ENCODE measurements at regions of chr10 and their contacts with region 1.

Region 1: GRCh38 chr10:43340619-43341018 is 30.8 kb upstream of the FXYD4 start:
- DNase-seq: peak; percentile 56
- H3K4me3 ChIP-seq: no peak overlapping the region
- H3K27ac ChIP-seq: no peak overlapping the region
- H3K4me1 ChIP-seq: no peaks in the 10 kb centered on the region
- H3K27me3 ChIP-seq: no peaks in the 10 kb centered on the region
- CTCF ChIP-seq: no peak
- POLR2A ChIP-seq: no peak

Region 2: GRCh38 chr10:43299579-43299978 is 41.0 kb before region 1 on chr10:
- intact Hi-C with region 1: loop called (anchors 5 kb)
- DNase-seq: no peak
- H3K4me3 ChIP-seq: no peak overlapping the region
- H3K27ac ChIP-seq: no peak overlapping the region
- H3K4me1 ChIP-seq: no peaks in the 10 kb centered on the region
- H3K27me3 ChIP-seq: no peaks in the 10 kb centered on the region
- CTCF ChIP-seq: no peak
- POLR2A ChIP-seq: no peak

Measured in prostate gland (tissue), 2 donors.